Right cardiac atrium (tissue), 5 donors: ENCODE measurements at regions of chr3 and their contacts with region 1.

Region 1: GRCh38 chr3:15427182-15427880 is at the starts of genes EAF1 and METTL6:
- DNase-seq: peak; percentile 90 to 94 (median 93)
- ATAC-seq: peak; percentile 96 to 97
- H3K4me3 ChIP-seq: peak within 1 kb of the TSS; percentile 93
- H3K27ac ChIP-seq: peak within 1 kb of the TSS; percentile 83
- H3K4me1 ChIP-seq: peaks cover 4% of the 10 kb centered on the region
- H3K27me3 ChIP-seq: no peaks in the 10 kb centered on the region
- total RNA-seq, gene EAF1: 6.7 to 13.1 (median 8.3) TPM
- total RNA-seq, gene METTL6: 8.3 to 11.8 (median 10.6) TPM

Region 2: DNA sequence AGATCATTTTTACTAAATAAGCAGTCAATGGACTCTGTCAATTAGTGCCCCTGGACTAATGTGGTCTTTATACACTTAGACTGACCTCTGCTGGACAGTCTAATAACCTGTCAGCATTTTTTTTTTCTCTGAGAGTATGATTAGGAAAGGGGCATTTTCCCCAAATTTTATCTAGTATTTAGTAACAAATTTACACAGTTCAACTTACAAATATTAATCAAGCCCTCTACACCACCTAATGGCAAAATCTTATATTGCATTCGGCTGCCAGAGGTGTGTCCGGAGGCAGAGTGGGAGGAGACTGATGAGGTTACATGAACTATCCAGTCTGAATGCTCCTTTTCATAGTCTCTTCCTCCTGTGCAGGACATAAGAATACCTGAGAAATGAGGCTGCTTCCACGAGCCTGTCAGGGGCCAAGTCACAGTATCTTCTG is 130.2 kb after region 1 on chr3:
- intact Hi-C with region 1: loop called in 3 of 4 experiments (anchors 5 to 10 kb)
- DNase-seq: peak in 1 of 3 donors; percentile 47
- ATAC-seq: peak; percentile 74 to 87
- H3K4me3 ChIP-seq: no peak overlapping the region
- H3K27ac ChIP-seq: no peak overlapping the region
- H3K4me1 ChIP-seq: no peaks in the 10 kb centered on the region
- H3K27me3 ChIP-seq: no peaks in the 10 kb centered on the region

Region 3: DNA sequence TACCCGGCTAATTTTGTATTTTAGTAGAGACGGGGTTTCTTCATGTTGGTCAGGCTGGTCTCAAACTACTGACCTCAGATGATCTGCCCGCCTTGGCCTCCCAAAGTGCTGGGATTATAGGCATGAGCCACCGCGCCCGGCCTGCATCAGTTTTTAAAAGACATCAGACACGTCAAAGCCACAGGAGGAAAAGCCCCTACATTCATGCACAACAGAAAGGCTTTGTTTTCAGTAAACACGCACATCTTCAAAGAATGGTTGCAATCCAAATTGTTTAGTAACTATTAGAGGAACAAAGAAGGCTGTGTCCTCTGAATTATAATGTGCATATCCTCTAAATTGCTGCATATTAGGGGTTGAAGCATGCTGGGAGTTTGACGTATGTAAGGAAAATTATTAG is 227.6 kb after region 1 on chr3:
- intact Hi-C with region 1: no loop called
- DNase-seq: no peak
- ATAC-seq: no peak
- H3K4me3 ChIP-seq: no peak overlapping the region
- H3K27ac ChIP-seq: no peak overlapping the region
- H3K4me1 ChIP-seq: no peaks in the 10 kb centered on the region
- H3K27me3 ChIP-seq: no peaks in the 10 kb centered on the region